ENCODE measurements at regions of chr13 and their contacts with region 1.

Region 1: DNA sequence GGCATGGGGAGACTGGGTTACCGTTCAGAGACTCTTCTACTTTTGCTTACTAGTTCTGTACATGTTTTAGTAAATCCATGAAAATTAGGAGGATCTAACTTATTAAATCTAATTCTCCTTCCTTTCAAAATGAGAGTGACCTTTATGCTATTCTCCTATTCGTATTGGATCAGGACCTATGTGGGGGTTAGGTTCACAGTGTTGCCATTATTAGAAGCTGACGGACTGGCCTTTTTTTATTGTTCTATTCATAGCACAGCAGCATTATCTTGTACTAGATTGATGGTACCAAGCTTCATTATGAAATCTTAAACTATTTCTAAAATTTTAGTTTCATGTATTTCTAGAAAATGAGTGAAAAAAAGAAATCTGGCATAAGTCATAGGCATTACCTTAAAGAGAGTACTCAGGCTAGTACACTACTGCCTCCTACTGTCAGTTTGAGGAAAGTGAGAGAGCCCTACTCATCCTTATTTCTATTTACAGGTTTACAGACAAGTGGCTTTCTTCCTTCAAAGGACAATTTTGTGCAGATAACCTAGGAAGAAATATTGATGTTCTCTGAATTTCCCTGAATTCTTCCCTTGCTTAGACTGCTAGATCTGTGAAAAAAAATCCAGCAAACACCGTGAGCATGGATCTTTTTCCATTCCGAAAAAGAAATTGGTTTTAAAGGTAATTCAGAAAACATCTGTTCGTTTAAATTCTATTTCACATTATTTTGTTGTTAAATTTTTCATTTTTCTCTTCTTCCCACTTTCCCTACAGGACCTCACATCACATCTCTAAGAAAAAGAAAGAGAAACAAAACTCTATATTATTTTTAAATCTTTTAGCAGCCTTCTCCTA is 485.5 kb downstream of the DIAPH3 start:
- DNase-seq: peak; percentile 68
- ATAC-seq: peak; percentile 71
- H3K4me3 ChIP-seq: no peak overlapping the region
- H3K27ac ChIP-seq: no peak overlapping the region
- H3K4me1 ChIP-seq: no peaks in the 10 kb centered on the region
- H3K27me3 ChIP-seq: no peaks in the 10 kb centered on the region
- CTCF ChIP-seq: peak; percentile 78

Region 2: DNA sequence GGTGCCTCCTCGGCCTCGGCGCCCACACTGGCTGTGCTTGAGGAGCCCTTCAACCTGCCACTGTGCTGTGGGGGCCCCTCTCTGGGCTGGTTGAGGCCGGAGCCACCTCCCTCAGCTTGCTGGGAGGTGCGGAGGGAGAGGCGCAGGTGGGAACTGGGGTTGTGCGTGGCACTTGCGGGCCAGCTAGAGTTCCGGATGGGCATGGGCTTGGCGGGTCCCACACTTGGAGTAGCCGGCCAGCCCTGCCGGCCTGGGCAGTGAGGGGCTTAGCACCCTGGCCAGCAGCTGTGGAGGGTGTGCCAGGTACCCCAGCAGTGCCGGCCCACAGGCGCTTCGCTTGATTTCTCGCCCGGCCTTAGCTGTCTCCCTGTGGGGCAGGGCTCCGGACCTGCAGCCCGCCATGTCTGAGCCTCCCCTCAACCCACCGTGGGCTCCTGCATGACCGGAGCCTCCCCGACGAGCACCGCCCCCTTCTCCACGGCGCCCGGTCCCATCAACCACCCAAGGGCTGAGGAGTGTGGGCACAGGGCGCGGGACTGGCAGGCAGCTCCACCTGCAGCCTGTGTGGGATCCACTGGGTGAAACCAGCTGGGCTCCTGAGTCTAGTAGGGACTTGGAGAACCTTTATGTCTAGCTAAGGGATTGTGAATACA is 238.3 kb before region 1 on chr13:
- CTCF ChIA-PET with region 1: no interaction called
- POLR2A ChIA-PET with region 1: no interaction called
- intact Hi-C with region 1: loop called (anchors 1 kb)
- DNase-seq: no peak
- ATAC-seq: no peak
- H3K4me3 ChIP-seq: no peak overlapping the region
- H3K27ac ChIP-seq: no peak overlapping the region
- H3K4me1 ChIP-seq: no peaks in the 10 kb centered on the region
- H3K27me3 ChIP-seq: no peaks in the 10 kb centered on the region
- CTCF ChIP-seq: no peak

Region 3: GRCh38 chr13:59531571-59532091 is 146.6 kb before region 1 on chr13:
- CTCF ChIA-PET with region 1: interaction called, 14 read pairs
- POLR2A ChIA-PET with region 1: no interaction called
- intact Hi-C with region 1: loop called (anchors 10 kb)
- DNase-seq: peak; percentile 77
- ATAC-seq: peak; percentile 60
- H3K4me3 ChIP-seq: no peak overlapping the region
- H3K27ac ChIP-seq: peak overlapping the region; percentile 54
- H3K4me1 ChIP-seq: peaks cover 37% of the 10 kb centered on the region
- H3K27me3 ChIP-seq: no peaks in the 10 kb centered on the region
- CTCF ChIP-seq: no peak

Region 4: DNA sequence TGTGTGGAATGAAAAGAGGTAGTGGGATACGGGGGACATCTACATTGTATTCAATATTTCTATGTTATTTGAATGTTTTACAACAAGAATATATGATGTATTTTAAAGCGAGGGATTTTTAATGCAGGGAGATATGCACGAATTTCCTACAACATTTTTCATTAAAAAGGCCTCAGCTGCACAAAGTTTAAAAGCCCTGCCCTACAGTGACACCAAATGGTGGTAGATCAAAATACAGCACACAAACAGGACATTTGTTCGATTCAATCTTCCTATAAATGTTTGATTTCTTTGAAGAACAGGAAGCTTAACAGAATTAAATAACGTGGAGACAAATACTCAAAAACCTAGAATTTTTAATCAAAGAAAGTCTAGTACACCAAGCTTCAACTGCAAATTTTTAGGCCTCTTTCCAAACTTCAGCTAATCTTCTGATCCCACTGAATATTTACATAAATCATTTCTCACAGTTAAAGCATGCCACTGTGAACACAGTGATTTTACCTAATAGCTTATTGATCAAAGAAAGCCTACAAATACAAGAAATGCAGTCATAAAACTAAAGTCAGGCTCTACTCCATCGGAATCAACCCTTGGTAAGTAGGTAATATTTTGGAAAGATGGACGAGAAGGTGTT is 228.3 kb after region 1 on chr13:
- CTCF ChIA-PET with region 1: interaction called, 4 read pairs
- POLR2A ChIA-PET with region 1: no interaction called
- intact Hi-C with region 1: loop called (anchors 1 kb)
- DNase-seq: peak; percentile 41
- ATAC-seq: peak; percentile 49; the same call in 1 of the 2 replicates
- H3K4me3 ChIP-seq: no peak overlapping the region
- H3K27ac ChIP-seq: no peak overlapping the region
- H3K4me1 ChIP-seq: no peaks in the 10 kb centered on the region
- H3K27me3 ChIP-seq: no peaks in the 10 kb centered on the region
- CTCF ChIP-seq: peak; percentile 72

Region 5: GRCh38 chr13:60329221-60329983 is 651.2 kb after region 1 on chr13:
- CTCF ChIA-PET with region 1: no interaction called
- POLR2A ChIA-PET with region 1: no interaction called
- intact Hi-C with region 1: loop called (anchors 5 kb)
- DNase-seq: peak; percentile 35
- ATAC-seq: peak; percentile 64
- H3K4me3 ChIP-seq: no peak overlapping the region
- H3K27ac ChIP-seq: no peak overlapping the region
- H3K4me1 ChIP-seq: no peaks in the 10 kb centered on the region
- H3K27me3 ChIP-seq: peaks cover 14% of the 10 kb centered on the region; the same call in 1 of the 2 replicates
- CTCF ChIP-seq: peak; percentile 57

Measured in PC-3 (cell line).